Activated CD8-positive, alpha-beta T cell treated with anti-CD3 and anti-CD28 coated beads for 36 hours (primary cell): ENCODE measurements at regions of chr9 and their contacts with region 1.

Region 1: GRCh38 chr9:131733541-131734061 is 6.3 kb downstream of the RAPGEF1 start:
- DNase-seq: peak; percentile 72
- ATAC-seq: peak; percentile 6
- H3K4me3 Mint-ChIP-seq: peak overlapping the region; percentile 41
- H3K27ac Mint-ChIP-seq: peak overlapping the region; percentile 92
- H3K4me1 Mint-ChIP-seq: peaks cover 88% of the 10 kb centered on the region
- H3K27me3 Mint-ChIP-seq: no peaks in the 10 kb centered on the region
- CTCF ChIP-seq: no peak

Region 2: GRCh38 chr9:131502781-131503625 is 230.6 kb before region 1 on chr9 and contains the start of gene POMT1:
- CTCF ChIA-PET with region 1: interaction called, 4 read pairs
- POLR2A ChIA-PET with region 1: interaction called, 3 read pairs
- intact Hi-C with region 1: loop called (anchors 5 kb)
- DNase-seq: peak; percentile 89
- ATAC-seq: peak; percentile 56
- H3K4me3 Mint-ChIP-seq: peak within 1 kb of the TSS; percentile 99
- H3K27ac Mint-ChIP-seq: peak within 1 kb of the TSS; percentile 91
- H3K4me1 Mint-ChIP-seq: peaks cover 57% of the 10 kb centered on the region
- H3K27me3 Mint-ChIP-seq: no peaks in the 10 kb centered on the region
- CTCF ChIP-seq: no peak
- total RNA-seq, gene POMT1: 30.2 to 35.9 TPM

Region 3: DNA sequence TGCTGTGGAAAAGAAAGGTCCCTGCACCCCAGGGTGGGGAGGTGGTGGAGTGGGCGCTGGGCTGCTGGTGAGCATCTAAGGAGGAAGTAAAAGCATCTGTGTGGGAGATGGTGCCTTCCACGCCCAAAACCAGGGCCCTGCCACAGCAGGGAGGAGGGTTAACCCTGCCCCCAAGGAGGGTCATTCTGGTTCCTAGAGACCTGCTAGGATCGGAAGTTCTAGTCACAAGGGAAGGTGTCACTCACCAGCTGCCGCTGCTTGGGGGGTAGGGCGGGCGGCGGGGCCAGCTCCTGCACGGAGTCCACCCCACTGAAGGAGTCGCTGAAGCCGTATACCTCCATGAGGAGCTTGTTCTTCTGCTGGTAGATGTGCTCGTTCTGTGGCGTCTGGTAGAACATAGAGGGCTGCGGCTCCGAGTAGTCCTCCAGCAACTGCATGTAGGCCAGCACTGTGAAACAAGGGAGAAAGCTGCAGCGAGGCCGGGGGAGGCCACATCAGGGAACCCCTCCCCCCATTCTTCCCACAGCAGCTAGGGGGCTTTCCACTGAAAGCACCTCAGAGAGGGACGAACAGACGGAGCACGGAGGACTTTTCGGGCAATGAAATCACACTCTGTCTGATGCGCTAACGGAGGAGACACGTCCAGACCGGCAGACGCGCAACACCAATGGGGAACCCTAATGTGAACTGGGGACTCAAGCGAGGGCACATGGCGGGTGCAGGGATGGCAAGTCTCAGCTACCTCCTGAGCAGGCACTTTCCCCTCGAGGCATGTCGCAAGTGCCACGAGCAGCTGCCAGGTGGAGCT is 111.8 kb before region 1 on chr9:
- CTCF ChIA-PET with region 1: no interaction called
- POLR2A ChIA-PET with region 1: no interaction called
- intact Hi-C with region 1: no loop called
- DNase-seq: no peak
- ATAC-seq: peak; percentile 25
- H3K4me3 Mint-ChIP-seq: no peak overlapping the region
- H3K27ac Mint-ChIP-seq: peak overlapping the region; percentile 56
- H3K4me1 Mint-ChIP-seq: peaks cover 6% of the 10 kb centered on the region
- H3K27me3 Mint-ChIP-seq: no peaks in the 10 kb centered on the region
- CTCF ChIP-seq: no peak

Region 4: GRCh38 chr9:131635285-131635684 is 98.3 kb before region 1 on chr9:
- CTCF ChIA-PET with region 1: interaction called, 15 read pairs
- POLR2A ChIA-PET with region 1: interaction called, 15 read pairs
- intact Hi-C with region 1: no loop called
- DNase-seq: peak; percentile 90
- ATAC-seq: peak; percentile 100
- H3K4me3 Mint-ChIP-seq: no peak overlapping the region
- H3K27ac Mint-ChIP-seq: peak overlapping the region; percentile 88
- H3K4me1 Mint-ChIP-seq: peaks cover 33% of the 10 kb centered on the region
- H3K27me3 Mint-ChIP-seq: no peaks in the 10 kb centered on the region
- CTCF ChIP-seq: no peak

Region 5: DNA sequence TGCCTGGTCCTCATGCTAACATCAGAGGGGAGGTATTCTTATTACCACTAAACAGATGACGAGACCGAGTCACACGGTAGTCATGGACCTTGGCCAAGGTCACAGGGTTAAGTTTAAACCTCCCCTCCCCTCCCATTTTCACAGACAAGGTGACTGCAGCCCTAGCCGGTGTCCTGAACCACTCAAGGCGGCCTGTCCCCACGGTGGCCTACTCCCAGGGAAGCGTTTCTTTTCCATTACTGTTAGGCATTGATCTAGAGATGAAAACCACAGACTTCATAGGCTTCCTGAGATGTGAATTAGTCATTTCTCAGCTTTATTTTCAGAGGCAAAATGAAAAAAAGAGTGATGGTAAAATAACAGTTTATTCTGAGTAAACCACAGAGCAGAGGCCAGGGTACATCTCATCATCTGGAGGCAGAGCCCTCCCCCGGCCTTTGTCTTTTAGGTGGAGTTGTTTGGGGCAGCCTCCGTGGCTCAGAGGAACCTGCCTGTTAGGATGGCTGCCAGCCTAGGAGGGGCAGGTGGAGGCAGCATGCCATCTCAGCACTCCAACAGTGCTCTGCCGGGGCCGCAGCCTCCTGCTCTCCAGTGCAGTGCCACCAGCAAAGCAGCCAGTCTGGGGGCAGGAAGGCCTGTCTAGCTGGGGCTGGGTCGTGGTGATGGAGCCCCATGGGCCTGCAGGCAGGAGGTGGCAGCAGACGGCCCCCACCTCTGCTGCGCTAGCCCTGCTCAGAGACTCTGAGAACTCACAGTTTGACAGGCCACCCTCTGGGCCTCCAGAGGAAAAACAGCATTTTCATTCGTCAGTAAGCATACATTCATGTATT is 64.9 kb before region 1 on chr9:
- CTCF ChIA-PET with region 1: interaction called, 4 read pairs
- POLR2A ChIA-PET with region 1: interaction called, 66 read pairs
- intact Hi-C with region 1: loop called (anchors 1 kb)
- DNase-seq: peak; percentile 87
- ATAC-seq: peak; percentile 74
- H3K4me3 Mint-ChIP-seq: peak overlapping the region; percentile 71
- H3K27ac Mint-ChIP-seq: peak overlapping the region; percentile 100
- H3K4me1 Mint-ChIP-seq: peaks cover 81% of the 10 kb centered on the region
- H3K27me3 Mint-ChIP-seq: no peaks in the 10 kb centered on the region
- CTCF ChIP-seq: no peak

Region 6: DNA sequence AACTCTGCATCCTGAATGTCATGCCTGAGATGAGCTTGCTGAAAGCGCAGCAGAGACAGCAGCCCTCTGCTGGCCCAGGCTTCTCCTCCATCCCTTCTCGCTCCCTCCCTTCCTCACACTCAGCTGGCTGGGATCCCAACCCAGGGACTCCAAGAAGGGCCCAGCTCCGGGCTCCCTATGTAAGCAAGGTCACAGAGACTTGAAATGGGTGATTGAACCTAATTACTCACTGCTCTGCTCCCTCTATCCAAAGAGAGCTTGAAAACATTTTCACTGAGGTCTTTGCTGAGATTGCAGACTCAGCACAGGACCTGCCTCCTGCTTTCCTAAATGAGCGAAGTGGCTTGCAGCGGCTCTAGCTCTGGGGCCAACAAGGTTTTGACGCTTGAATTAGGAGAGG is 36.5 kb before region 1 on chr9:
- CTCF ChIA-PET with region 1: interaction called, 17 read pairs
- POLR2A ChIA-PET with region 1: interaction called, 4 read pairs
- intact Hi-C with region 1: loop called (anchors 5 kb)
- DNase-seq: no peak
- ATAC-seq: no peak
- H3K4me3 Mint-ChIP-seq: no peak overlapping the region
- H3K27ac Mint-ChIP-seq: no peak overlapping the region
- H3K4me1 Mint-ChIP-seq: peaks cover 79% of the 10 kb centered on the region
- H3K27me3 Mint-ChIP-seq: no peaks in the 10 kb centered on the region
- CTCF ChIP-seq: no peak

Region 7: DNA sequence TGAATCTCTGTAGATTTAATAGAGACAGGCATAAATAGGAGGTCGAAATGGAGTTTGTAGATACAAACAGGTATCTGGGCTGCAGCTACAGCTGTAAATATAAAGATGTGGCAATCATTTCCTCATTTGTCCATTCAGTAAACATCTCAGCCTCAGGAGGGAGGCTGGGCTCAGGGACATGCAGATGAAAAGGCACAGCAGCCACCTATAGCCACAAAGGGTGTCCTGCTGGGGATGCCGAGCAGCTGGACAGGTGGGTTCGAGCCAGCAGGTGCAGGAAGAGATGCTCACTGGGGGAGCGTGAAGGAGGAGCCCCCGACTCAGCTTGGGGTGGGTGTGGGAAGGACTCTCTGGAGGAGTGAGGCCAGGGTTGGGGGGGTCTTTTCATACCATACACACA is 54.7 kb after region 1 on chr9:
- CTCF ChIA-PET with region 1: no interaction called
- POLR2A ChIA-PET with region 1: no interaction called
- intact Hi-C with region 1: no loop called
- DNase-seq: no peak
- ATAC-seq: no peak
- H3K4me3 Mint-ChIP-seq: no peak overlapping the region
- H3K27ac Mint-ChIP-seq: no peak overlapping the region
- H3K4me1 Mint-ChIP-seq: no peaks in the 10 kb centered on the region
- H3K27me3 Mint-ChIP-seq: peaks cover 37% of the 10 kb centered on the region
- CTCF ChIP-seq: no peak

Region 8: GRCh38 chr9:131839281-131840084 is 105.9 kb after region 1 on chr9:
- CTCF ChIA-PET with region 1: no interaction called
- POLR2A ChIA-PET with region 1: no interaction called
- intact Hi-C with region 1: no loop called
- DNase-seq: peak; percentile 66
- ATAC-seq: peak; percentile 63
- H3K4me3 Mint-ChIP-seq: no peak overlapping the region
- H3K27ac Mint-ChIP-seq: peak overlapping the region; percentile 81
- H3K4me1 Mint-ChIP-seq: peaks cover 9% of the 10 kb centered on the region
- H3K27me3 Mint-ChIP-seq: peaks cover 8% of the 10 kb centered on the region
- CTCF ChIP-seq: no peak